Heart right ventricle (tissue), 16 donors: ENCODE measurements at regions of chr10 and their contacts with region 1.

Region 1: DNA sequence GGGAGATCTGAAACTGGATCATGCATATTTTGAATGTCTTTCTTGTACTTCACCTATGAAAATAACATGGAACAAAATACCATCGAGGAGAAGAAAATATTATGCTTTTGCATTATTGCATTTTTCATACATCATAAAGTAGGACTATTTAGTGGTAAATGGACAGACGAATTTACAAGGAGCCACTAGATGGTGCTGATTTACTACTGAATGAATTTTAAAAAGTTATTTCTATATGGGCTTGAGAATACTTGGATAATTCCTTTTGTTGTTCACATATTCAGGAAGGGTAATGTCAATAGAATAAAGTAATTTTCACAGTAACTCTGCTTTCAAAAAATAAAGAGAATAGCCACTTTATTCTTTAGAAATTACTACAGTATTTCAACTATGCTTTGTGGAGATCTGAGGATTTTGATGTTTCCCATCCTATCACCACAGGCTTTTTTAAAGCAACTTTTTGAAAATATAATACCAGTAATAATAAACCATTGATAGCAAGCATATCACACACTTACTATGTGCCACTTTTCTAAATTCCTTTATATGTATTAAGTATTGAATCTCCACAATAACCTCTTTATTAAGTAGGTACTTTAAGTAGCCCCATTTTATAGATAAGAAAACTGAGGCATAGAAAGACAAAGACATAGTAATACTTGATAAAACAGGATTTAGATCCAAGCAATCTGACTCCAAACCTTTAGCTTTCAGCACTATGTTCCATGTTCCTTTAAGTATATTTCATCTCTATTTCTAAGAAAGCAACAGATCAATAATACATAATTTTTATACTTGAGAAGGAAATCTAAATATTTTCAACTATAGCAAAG is 38.6 kb downstream of the NEBL start:
- DNase-seq: no peak
- ATAC-seq: no peak
- H3K4me3 ChIP-seq: no peak overlapping the region
- H3K27ac ChIP-seq: no peak overlapping the region
- H3K4me1 ChIP-seq: peaks cover 0 to 32% (median 0%) of the 10 kb centered on the region in 9 donors
- H3K27me3 ChIP-seq: no peaks in the 10 kb centered on the region
- CTCF ChIP-seq: peak in 8 of 9 donors; percentile 18 to 63 (median 49)

Region 2: DNA sequence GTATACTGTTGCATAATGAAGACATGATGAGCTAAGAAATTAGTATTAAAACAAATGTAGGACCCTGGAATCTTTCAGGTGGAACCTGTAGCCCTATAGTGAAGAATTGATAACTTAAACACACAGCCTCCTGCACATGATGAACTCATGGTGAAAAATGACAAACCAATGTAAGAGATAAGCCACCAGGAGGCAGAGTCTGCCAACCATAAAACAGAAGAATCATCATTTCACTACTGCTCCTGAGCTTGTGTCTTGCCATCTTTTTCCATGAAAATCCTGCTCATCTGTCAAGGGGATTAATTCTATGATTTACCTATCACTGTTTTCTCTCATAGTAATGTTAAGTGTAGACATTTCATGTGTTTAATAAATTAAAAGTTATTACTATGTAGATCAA is 1446.0 kb before region 1 on chr10:
- intact Hi-C with region 1: loop called in 1 of 10 experiments (anchors 10 kb)
- DNase-seq: no peak
- ATAC-seq: no peak
- H3K4me3 ChIP-seq: no peak overlapping the region
- H3K27ac ChIP-seq: no peak overlapping the region
- H3K4me1 ChIP-seq: no peaks in the 10 kb centered on the region
- H3K27me3 ChIP-seq: no peaks in the 10 kb centered on the region
- CTCF ChIP-seq: peak in 8 of 9 donors; percentile 13 to 58 (median 40)

Region 3: DNA sequence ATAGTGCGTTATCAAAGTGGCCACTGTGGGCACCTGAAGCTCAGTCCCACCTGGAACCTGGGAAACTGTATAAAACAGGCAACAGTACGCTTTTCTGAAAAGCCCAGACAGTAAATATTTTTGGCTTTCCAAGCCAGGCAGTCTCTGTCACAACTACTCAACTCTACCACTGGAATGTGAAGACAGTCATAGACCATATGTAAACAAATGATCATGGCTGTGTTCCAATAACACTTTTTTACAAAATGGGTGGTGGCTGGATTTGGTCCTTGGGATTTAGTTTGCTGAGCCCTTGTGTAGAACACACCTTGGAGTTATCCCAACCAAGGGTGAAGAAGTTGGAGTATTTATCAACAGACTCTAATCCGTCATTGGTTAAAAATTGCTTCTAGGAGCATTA is 407.1 kb after region 1 on chr10:
- intact Hi-C with region 1: loop called in 7 of 10 experiments (anchors 5 to 10 kb)
- DNase-seq: no peak
- ATAC-seq: no peak
- H3K4me3 ChIP-seq: no peak overlapping the region
- H3K27ac ChIP-seq: no peak overlapping the region
- H3K4me1 ChIP-seq: peaks cover 0 to 4% (median 0%) of the 10 kb centered on the region in 9 donors
- H3K27me3 ChIP-seq: no peaks in the 10 kb centered on the region
- CTCF ChIP-seq: no peak

Region 4: DNA sequence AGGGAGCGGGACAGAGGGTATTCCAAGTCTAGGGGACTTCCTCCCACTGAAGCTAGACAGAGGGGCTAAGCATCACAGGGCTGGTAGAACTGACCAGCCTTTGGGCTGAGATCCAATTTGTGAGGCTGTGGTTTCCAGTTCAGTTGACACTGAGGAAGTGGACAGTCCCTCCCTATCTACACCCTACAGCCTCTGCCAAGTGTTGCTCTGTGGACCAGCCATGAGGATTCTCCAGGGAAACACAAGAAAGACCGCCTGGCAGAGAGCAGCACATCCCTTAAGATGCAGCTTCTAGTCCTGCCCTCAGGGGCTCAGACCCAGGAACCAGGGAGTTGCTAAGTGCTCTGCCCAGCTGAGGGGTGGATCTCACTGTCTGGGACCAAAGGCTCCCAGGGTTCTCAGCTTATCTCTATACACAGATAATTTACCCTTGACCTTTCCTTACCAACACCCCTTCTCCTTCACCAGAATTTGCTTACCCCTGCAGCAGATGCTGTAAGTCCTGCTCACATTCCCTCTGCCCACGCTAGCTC is 415.0 kb after region 1 on chr10:
- intact Hi-C with region 1: loop called in 7 of 10 experiments (anchors 5 to 10 kb)
- DNase-seq: no peak
- ATAC-seq: peak in 3 of 8 donors; percentile 15 to 50 (median 21)
- H3K4me3 ChIP-seq: no peak overlapping the region
- H3K27ac ChIP-seq: no peak overlapping the region
- H3K4me1 ChIP-seq: peaks cover 0 to 5% (median 0%) of the 10 kb centered on the region in 9 donors
- H3K27me3 ChIP-seq: no peaks in the 10 kb centered on the region
- CTCF ChIP-seq: no peak